SK-N-SH (cell line): ENCODE measurements at regions of chr11 and their contacts with region 1.

Region 1: GRCh38 chr11:106322111-106322510 is 244.6 kb downstream of the AASDHPPT start:
- DNase-seq: no peak
- H3K4me3 ChIP-seq: no peak overlapping the region
- H3K27ac ChIP-seq: no peak overlapping the region
- H3K4me1 ChIP-seq: no peaks in the 10 kb centered on the region
- H3K27me3 ChIP-seq: no peaks in the 10 kb centered on the region
- CTCF ChIP-seq: no peak
- EP300 ChIP-seq: no peak
- RAD21 ChIP-seq: no peak

Region 2: DNA sequence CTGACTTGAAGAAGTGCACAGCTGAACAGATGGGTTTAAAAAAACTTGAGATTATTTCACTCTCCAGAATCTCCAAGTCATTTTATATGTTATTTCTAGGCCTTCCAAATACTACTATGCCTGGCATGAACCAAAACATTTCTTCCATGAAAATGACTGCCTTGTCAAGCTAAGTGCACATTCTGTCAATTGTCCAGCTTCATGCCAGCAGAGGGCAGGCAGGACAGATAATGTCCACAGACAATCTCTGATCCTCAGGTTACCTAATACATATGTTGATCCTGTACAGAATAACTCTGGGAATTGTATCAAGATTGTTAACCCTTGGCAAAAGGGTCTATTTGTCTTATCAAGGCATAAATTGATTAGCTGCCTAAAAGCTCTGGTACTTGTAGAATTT is 15.2 kb before region 1 on chr11:
- CTCF ChIA-PET with region 1: interaction called, 12 read pairs
- POLR2A ChIA-PET with region 1: no interaction called
- DNase-seq: no peak
- H3K4me3 ChIP-seq: no peak overlapping the region
- H3K27ac ChIP-seq: no peak overlapping the region
- H3K4me1 ChIP-seq: no peaks in the 10 kb centered on the region; a peak in 1 of 4 replicates
- H3K27me3 ChIP-seq: no peaks in the 10 kb centered on the region
- CTCF ChIP-seq: peak; percentile 44
- EP300 ChIP-seq: no peak
- RAD21 ChIP-seq: peak; percentile 30; the same call in 1 of the 2 replicates